Gastrocnemius medialis (tissue), 4 donors: ENCODE measurements at regions of chr21 and their contacts with region 1.

Region 1: DNA sequence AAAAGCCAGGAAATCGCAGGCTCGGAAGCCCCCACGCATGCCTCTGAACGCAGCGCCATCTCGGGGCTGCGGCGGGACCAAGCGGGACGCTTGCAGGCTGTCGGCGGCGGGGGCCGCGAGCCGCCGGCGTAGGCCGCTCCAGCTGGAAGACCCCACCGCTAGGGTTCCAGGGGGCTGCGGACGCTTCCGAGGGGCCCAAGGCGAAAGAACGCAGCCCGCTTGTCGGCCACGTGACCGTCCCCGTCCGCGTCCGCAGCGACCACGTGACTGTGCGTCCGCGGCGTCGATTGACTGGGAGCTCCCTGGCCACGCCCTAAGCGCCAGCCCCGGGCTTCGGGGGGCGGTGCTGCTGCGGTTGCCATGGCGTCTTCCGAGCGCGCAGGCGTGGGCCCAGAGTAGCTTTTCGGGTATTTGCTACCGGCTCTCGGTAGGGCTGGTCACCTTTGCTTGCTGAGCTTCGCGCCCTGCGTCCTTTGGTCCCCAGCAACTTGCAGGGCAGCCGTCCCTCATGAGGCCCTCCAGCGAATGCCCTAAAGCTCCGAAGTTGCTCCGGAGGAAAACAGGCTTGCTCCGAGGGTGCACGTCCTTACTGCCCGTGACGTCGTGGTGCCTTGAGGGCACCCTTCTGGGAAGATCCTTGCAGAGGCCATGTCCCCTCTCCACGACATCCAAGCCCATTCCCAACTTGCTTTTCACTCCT is 197.2 kb downstream of the DYRK1A start:
- DNase-seq: peak; percentile 92 to 94
- ATAC-seq: peak; percentile 64 to 69
- H3K4me3 ChIP-seq: peak overlapping the region; percentile 80 to 93 (median 84)
- H3K27ac ChIP-seq: peak overlapping the region; percentile 94 to 98 (median 98)
- H3K4me1 ChIP-seq: peaks cover 43 to 44% of the 10 kb centered on the region in 2 donors
- H3K27me3 ChIP-seq: no peaks in the 10 kb centered on the region
- CTCF ChIP-seq: peak in 4 of 5 experiments; percentile 39 to 56 (median 50)
- POLR2A ChIP-seq: peak; percentile 92 to 95

Region 2: GRCh38 chr21:37009740-37010341 is 554.0 kb before region 1 on chr21:
- in situ Hi-C with region 1: no loop called
- intact Hi-C with region 1: no loop called
- DNase-seq: peak; percentile 62 to 68
- ATAC-seq: peak; percentile 95 to 98
- H3K4me3 ChIP-seq: peak overlapping the region in 3 of 4 donors; percentile 23 to 40 (median 33)
- H3K27ac ChIP-seq: no peak overlapping the region
- H3K4me1 ChIP-seq: peaks cover 3 to 11% of the 10 kb centered on the region in 2 donors
- H3K27me3 ChIP-seq: peaks cover 25 to 34% (median 32%) of the 10 kb centered on the region in 3 donors
- CTCF ChIP-seq: peak; percentile 61 to 84 (median 73)
- POLR2A ChIP-seq: no peak

Region 3: DNA sequence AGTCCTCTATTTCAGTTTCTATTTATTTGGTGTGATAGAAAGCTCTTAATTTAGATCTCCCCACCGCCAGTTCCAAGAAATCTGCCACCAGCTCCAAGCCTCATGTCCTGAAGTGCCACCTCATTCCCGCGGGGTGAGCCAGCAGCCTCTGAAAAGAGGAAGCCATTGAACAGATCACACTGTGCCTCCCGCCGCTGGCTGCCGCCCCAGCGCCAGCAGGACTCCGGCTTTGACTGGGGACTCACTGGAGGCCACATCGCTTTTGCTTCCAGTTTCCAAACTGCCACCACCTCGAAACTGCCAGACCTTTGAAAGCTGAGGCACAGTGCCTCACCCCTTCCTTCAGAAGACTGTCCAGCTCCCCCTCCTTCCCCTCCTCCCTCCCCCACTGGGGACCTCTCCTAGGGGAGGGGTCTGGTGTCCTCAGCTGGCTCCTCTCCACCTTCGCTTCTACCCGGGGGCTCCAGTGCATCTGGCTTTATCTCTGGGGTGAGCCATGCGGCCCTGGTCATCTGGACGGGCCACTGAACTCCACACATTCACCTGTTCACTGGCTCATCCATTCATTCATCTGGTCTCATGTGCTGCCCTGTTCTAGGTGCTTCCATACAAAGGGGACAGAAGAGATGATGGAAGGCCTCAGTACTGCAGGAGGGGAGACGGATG is 355.6 kb before region 1 on chr21:
- in situ Hi-C with region 1: no loop called
- intact Hi-C with region 1: loop called (anchors 5 kb)
- DNase-seq: peak; percentile 83 to 90
- ATAC-seq: peak; percentile 77 to 86
- H3K4me3 ChIP-seq: peak overlapping the region; percentile 33 to 56 (median 49)
- H3K27ac ChIP-seq: peak overlapping the region; percentile 87 to 98 (median 95)
- H3K4me1 ChIP-seq: peaks cover 33 to 44% of the 10 kb centered on the region in 2 donors
- H3K27me3 ChIP-seq: no peaks in the 10 kb centered on the region
- CTCF ChIP-seq: no peak
- POLR2A ChIP-seq: no peak

Region 4: DNA sequence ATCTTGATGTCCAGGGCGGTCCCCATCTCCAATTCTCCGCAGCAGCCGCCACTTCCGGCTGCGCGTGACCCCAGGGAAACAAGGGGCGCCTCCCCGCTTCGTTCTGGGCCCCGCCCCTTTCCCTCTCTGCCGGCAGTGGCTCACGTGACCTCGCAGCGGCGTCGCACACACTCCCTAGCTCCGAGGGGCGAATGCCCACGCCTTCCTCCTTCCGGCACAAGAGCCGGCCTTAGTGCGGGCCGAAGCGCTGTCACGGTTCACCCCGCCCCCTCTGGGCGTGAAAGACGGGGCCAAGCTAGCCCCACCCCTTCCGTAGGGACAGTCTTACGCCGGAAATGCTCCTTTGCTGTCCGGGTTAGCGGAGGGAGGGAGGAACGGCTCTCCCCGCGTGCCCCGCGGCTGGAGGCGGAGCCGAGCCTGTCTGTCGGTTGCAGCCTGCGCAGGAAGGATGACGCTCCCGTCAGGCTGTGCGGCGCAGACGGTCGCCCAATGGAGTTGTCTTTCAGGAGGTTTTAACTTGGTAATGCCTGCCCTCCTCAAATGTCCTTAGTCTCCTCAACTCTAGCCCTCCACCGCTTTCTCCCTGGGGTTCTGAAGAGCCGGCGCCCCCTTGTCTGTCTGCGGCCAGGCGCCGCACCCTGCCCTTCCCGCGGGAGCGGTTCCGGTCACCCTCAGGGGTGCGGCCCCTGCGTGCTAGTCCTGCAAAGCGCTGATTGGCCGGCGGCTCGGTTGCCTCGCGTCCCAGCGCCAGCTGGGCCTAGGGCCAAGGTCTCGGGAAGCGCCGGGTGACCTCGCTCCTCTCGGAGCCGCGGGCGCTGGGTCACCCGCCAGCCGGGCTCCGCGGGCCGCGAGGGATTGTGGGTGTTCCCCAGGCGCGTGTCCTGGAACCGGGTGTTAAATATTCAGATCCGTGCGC is 296.3 kb before region 1 on chr21 and contains the start of gene VPS26C:
- in situ Hi-C with region 1: loop called in 1 of 4 experiments (anchors 25 kb)
- intact Hi-C with region 1: loop called (anchors 1 kb)
- DNase-seq: peak; percentile 97 to 99
- ATAC-seq: peak; percentile 88 to 94
- H3K4me3 ChIP-seq: peak within 1 kb of the TSS; percentile 72 to 90 (median 84)
- H3K27ac ChIP-seq: peak within 1 kb of the TSS; percentile 89 to 97 (median 96)
- H3K4me1 ChIP-seq: peaks cover 37 to 41% of the 10 kb centered on the region in 2 donors
- H3K27me3 ChIP-seq: no peaks in the 10 kb centered on the region
- CTCF ChIP-seq: peak in 1 of 5 experiments; percentile 32
- POLR2A ChIP-seq: peak; percentile 88 to 92
- total RNA-seq, gene VPS26C: 57.6 to 82.7 (median 75.4) TPM

Region 5: GRCh38 chr21:37338671-37339551 is 224.9 kb before region 1 on chr21:
- in situ Hi-C with region 1: no loop called
- intact Hi-C with region 1: loop called (anchors 2 kb)
- DNase-seq: peak; percentile 70 to 92
- ATAC-seq: peak; percentile 96 to 97
- H3K4me3 ChIP-seq: peak overlapping the region; percentile 17 to 40 (median 28)
- H3K27ac ChIP-seq: peak overlapping the region; percentile 85 to 92 (median 86)
- H3K4me1 ChIP-seq: peaks cover 10 to 21% of the 10 kb centered on the region in 2 donors
- H3K27me3 ChIP-seq: no peaks in the 10 kb centered on the region
- CTCF ChIP-seq: no peak
- POLR2A ChIP-seq: peak in 1 of 2 donors; percentile 12

Region 6: DNA sequence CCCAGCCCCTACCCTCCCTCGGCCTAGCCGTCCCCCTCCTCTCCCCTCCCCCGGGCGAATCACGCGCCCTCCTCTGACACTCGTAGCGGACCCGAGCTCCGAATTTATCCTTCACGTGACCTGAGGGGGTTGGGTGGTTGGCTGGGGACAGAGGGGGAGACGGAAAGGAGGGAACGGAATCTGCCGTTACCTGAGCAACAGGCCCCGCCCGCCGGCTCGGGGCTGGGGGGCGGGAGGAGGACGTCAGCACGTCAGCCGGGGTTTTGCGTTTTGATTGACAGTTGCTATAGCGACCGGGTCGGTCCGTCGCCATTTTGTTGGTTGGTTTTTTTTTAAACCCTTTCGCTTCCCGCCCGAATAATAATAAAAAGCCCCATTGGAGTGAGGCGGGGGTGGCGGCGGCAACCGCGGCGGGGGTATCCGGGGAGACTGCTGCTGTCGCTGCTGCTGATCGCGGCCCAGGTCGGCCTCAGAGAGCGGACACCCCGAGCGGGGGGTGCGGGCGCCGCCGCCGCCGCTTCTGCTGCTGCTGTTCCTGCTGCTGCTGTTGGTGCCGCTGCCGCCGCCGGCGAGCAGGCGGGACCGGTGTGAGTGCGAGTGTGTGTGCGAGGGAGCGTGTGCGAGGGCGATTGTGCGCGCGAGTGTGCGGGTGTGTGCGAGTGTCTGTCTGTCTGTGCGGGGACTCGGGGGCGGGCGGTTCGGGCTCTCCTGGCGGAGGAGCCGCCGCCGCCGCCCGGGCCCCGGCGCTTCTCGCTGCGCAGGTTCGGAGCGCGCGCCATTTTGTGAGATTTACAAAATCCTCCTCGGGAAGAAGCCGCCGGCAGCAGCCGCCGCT is 197.1 kb before region 1 on chr21 and contains the start of gene DYRK1A:
- in situ Hi-C with region 1: no loop called
- intact Hi-C with region 1: loop called (anchors 2 kb)
- DNase-seq: peak; percentile 99 to 100
- ATAC-seq: peak; percentile 78 to 82
- H3K4me3 ChIP-seq: peak within 1 kb of the TSS; percentile 83 to 97 (median 92)
- H3K27ac ChIP-seq: peak within 1 kb of the TSS; percentile 99 to 100 (median 100)
- H3K4me1 ChIP-seq: peaks cover 31 to 39% of the 10 kb centered on the region in 2 donors
- H3K27me3 ChIP-seq: no peaks in the 10 kb centered on the region
- CTCF ChIP-seq: peak in 1 of 5 experiments; percentile 16
- POLR2A ChIP-seq: peak; percentile 79 to 89
- total RNA-seq, gene DYRK1A: 81.0 to 115 (median 95.3) TPM

Region 7: GRCh38 chr21:37458666-37459276 is 105.0 kb before region 1 on chr21:
- in situ Hi-C with region 1: no loop called
- intact Hi-C with region 1: loop called (anchors 5 kb)
- DNase-seq: no peak
- ATAC-seq: peak; percentile 8 to 51
- H3K4me3 ChIP-seq: peak overlapping the region in 2 of 4 donors; percentile 11 to 15
- H3K27ac ChIP-seq: peak overlapping the region; percentile 78 to 86 (median 80)
- H3K4me1 ChIP-seq: peaks cover 97 to 99% of the 10 kb centered on the region in 2 donors
- H3K27me3 ChIP-seq: no peaks in the 10 kb centered on the region
- CTCF ChIP-seq: no peak
- POLR2A ChIP-seq: no peak

Region 8: DNA sequence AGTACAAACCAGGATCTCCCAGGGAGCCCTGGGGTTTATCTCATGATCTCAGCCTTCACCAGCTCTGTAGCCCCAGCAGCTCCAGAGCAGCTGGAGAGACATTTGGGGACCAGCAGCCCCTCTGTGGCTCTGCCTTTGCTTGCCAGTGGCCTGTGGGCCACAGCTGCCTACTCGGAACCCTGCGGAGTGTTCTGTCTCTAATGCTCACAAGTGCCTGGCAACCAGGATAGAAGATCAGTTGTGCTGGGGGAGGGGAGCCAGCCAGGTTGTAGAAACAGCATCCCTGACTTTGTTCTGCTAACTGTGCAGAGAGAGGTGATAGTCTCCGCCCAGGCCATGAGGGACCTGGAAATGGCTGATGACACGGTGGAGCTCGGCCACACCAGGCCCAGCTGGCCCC is 642.1 kb after region 1 on chr21:
- in situ Hi-C with region 1: no loop called
- intact Hi-C with region 1: no loop called
- DNase-seq: no peak
- ATAC-seq: no peak
- H3K4me3 ChIP-seq: no peak overlapping the region
- H3K27ac ChIP-seq: no peak overlapping the region
- H3K4me1 ChIP-seq: no peaks in the 10 kb centered on the region
- H3K27me3 ChIP-seq: peaks cover 0 to 7% (median 0%) of the 10 kb centered on the region in 3 donors
- CTCF ChIP-seq: no peak
- POLR2A ChIP-seq: no peak

Region 9: GRCh38 chr21:38903690-38904139 is 1339.9 kb after region 1 on chr21:
- in situ Hi-C with region 1: no loop called
- intact Hi-C with region 1: loop called (anchors 5 kb)
- DNase-seq: peak; percentile 74 to 85
- ATAC-seq: peak; percentile 50 to 56
- H3K4me3 ChIP-seq: no peak overlapping the region
- H3K27ac ChIP-seq: peak overlapping the region; percentile 88 to 95 (median 92)
- H3K4me1 ChIP-seq: peaks cover 45 to 46% of the 10 kb centered on the region in 2 donors
- H3K27me3 ChIP-seq: no peaks in the 10 kb centered on the region
- CTCF ChIP-seq: no peak
- POLR2A ChIP-seq: peak; percentile 53 to 69